HEK293 (cell line): ENCODE measurements at regions of chr2 and their contacts with region 1.

Region 1: DNA sequence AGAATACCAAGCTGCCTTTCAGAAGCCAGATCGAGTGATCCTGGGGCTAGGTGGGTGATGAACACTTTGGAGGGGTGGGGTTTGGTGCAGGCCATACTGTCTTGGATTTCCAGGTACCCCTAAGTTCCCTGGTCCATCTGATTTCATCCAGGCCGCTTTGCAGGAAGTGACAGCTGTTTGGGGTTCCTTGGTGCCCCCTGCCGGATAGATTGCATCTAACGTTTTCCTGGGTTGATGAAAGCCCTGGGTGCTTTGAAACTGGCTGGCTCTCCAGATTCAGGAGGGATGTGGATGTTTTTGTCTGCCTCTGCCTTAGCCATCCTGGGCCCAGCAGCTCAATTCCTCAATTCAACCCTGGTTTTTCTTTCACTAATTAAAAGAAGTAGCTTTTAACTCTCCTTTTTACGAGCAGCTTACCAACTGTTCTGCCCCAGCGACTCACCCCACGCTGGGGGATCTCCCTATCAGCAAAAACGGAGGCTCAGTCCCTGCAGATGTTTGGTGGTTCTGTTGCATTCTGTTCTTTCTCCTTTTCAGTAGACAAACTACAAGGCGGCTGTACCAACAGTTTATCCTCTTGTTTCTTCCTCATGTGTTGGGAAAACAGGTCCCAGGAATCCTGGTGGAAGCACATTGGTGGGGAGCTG is 37.1 kb downstream of the ARHGEF4 start:
- H3K4me3 ChIP-seq: no peak overlapping the region
- H3K27ac ChIP-seq: no peak overlapping the region
- H3K4me1 ChIP-seq: no peaks in the 10 kb centered on the region
- CTCF ChIP-seq: peak; percentile 39

Region 2: DNA sequence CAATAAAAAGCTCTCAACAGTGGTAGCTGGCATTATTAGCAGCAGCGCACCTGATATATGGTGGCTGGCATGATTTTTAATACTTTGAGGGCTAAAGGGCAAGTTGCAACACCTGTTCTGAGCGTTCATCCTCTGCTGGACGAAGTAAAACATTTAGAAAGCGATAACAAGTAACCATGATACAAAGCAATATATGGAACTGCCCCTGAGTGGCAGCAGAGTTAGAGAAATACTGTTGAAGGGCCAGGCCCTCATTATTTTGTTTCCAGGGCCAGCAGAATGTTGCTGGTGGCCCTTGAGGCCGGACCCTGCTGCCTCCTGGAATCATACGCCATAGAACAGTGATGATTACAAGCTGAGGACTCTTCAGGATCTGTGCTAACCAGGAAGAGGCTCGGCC is 10.7 kb after region 1 on chr2:
- CTCF ChIA-PET with region 1: interaction called, 16 read pairs
- POLR2A ChIA-PET with region 1: no interaction called
- H3K4me3 ChIP-seq: no peak overlapping the region
- H3K27ac ChIP-seq: no peak overlapping the region
- H3K4me1 ChIP-seq: no peaks in the 10 kb centered on the region
- CTCF ChIP-seq: no peak

Region 3: GRCh38 chr2:130890941-130891669 is 17.3 kb after region 1 on chr2:
- CTCF ChIA-PET with region 1: interaction called, 15 read pairs
- POLR2A ChIA-PET with region 1: no interaction called
- H3K4me3 ChIP-seq: no peak overlapping the region
- H3K27ac ChIP-seq: no peak overlapping the region
- H3K4me1 ChIP-seq: no peaks in the 10 kb centered on the region
- CTCF ChIP-seq: no peak

Region 4: DNA sequence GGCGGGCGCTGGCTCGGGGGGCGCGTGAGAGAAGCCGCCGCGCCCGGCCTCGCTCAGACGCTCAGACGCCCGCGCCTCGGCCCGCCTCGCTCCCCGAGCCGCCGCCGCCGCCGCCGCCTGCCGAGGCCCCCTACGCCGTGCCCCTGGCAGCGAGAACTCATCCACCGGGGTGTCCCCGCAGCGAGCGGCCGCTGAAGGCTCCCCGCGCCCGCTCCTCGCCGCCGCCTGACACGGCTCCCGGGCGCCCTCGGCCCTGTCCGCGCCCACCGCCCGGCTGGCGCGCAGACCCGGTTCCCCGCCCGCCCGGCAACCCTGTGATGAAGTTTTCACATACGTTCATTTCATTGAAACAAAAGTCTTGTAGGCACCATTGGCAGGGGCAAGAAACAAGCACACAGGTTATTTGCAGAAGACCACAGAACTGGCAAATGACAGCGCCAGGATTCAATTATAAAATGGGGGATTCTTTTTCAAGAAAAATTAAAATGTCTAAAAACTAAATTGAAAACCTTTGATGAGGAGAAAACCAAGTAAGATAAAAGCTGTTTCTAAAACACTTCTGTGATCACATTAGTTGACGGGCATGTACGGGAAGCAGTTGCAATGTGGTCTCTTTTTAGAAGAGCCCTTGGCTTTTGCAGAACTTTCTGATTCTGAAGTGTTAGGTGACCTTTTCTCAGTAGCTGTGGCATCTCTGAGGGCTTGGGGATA is 551.6 kb after region 1 on chr2:
- CTCF ChIA-PET with region 1: no interaction called
- POLR2A ChIA-PET with region 1: no interaction called
- H3K4me3 ChIP-seq: peak overlapping the region; percentile 24
- H3K27ac ChIP-seq: no peak overlapping the region
- H3K4me1 ChIP-seq: no peaks in the 10 kb centered on the region
- CTCF ChIP-seq: no peak